PC-3 (cell line): ENCODE measurements at regions of chr6 and their contacts with region 1.

Region 1: GRCh38 chr6:116255246-116255800 is 1.4 kb upstream of the TSPYL4 start:
- DNase-seq: no peak
- ATAC-seq: no peak
- H3K4me3 ChIP-seq: peak overlapping the region; percentile 97
- H3K27ac ChIP-seq: no peak overlapping the region
- H3K4me1 ChIP-seq: peaks cover 25% of the 10 kb centered on the region
- H3K27me3 ChIP-seq: no peaks in the 10 kb centered on the region
- CTCF ChIP-seq: no peak

Region 2: GRCh38 chr6:116279260-116280063 is 24.1 kb after region 1 on chr6 and contains the start of gene TSPYL1:
- CTCF ChIA-PET with region 1: no interaction called
- POLR2A ChIA-PET with region 1: interaction called, 24 read pairs
- intact Hi-C with region 1: no loop called
- DNase-seq: peak; percentile 95
- ATAC-seq: peak; percentile 94
- H3K4me3 ChIP-seq: peak within 1 kb of the TSS; percentile 99
- H3K27ac ChIP-seq: peak within 1 kb of the TSS; percentile 77
- H3K4me1 ChIP-seq: peaks cover 9% of the 10 kb centered on the region
- H3K27me3 ChIP-seq: no peaks in the 10 kb centered on the region
- CTCF ChIP-seq: 0 out of 2 replicates have a peak, but pooled peaks have one; percentile 21
- total RNA-seq, gene TSPYL1: 35.1 and 38.8 TPM in 2 replicates

Region 3: GRCh38 chr6:116338943-116339342 is 83.6 kb after region 1 on chr6:
- CTCF ChIA-PET with region 1: no interaction called
- POLR2A ChIA-PET with region 1: no interaction called
- intact Hi-C with region 1: no loop called
- DNase-seq: no peak
- ATAC-seq: no peak
- H3K4me3 ChIP-seq: no peak overlapping the region
- H3K27ac ChIP-seq: no peak overlapping the region
- H3K4me1 ChIP-seq: no peaks in the 10 kb centered on the region
- H3K27me3 ChIP-seq: no peaks in the 10 kb centered on the region
- CTCF ChIP-seq: no peak